T-cell (primary cell): ENCODE measurements at regions of chr16 and their contacts with region 1.

Region 1: GRCh38 chr16:81668243-81669097 is 110.6 kb upstream of the PLCG2 start:
- DNase-seq: peak in 1 of 35 experiments; percentile 2
- ATAC-seq: no peak
- H3K4me3 ChIP-seq: no peak overlapping the region
- H3K4me3 Mint-ChIP-seq: no peak overlapping the region
- H3K27ac ChIP-seq: peak overlapping the region; percentile 29
- H3K27ac Mint-ChIP-seq: peak overlapping the region; percentile 36 to 40
- H3K4me1 ChIP-seq: peaks cover 0 to 2% of the 10 kb centered on the region in 2 experiments
- H3K4me1 Mint-ChIP-seq: no peaks in the 10 kb centered on the region
- H3K27me3 ChIP-seq: no peaks in the 10 kb centered on the region
- H3K27me3 Mint-ChIP-seq: no peaks in the 10 kb centered on the region

Region 2: DNA sequence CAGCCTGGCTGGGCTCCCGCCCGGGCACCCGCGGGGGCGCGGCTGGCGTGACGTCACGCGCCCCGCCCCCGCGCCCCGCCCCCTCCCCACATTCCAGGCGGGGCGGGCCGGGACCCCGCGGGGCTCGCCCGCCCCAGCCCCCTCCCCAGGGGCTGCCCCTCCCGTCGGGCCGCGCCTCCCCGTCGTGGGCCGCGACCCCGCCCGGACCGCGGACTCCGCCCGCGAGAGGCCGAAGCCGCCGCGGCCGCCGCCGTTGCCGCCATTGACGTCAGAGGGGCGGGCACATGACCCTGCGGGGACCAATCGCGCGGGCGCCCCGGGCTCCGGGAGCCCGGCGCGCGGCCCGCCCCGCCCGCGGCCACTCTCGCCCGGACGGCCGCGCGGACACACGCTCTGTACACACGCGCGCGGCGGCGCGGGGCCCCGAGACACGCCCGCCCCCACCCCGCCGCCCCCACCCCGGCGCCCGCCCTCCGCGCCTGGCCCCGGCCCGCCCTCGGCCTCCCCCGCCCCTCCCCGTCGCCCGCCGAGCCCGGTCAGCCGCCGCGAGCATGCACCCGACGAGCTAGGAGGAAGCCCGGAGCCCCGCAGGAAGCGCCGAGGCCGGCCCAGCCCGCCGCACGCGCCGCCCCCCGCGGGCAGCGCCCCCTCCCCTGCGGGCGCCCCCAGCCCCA is 223.9 kb before region 1 on chr16 and contains the start of gene CMIP:
- CTCF ChIA-PET with region 1: interaction called in 1 of 2 experiments, 12 read pairs
- POLR2A ChIA-PET with region 1: no interaction called
- DNase-seq: peak; percentile 50 to 88 (median 71)
- ATAC-seq: peak; percentile 72 to 80 (median 74)
- H3K4me3 ChIP-seq: peak within 1 kb of the TSS; percentile 59 to 95
- H3K4me3 Mint-ChIP-seq: peak within 1 kb of the TSS; percentile 87 to 97 (median 89)
- H3K27ac ChIP-seq: peak within 1 kb of the TSS; percentile 69
- H3K27ac Mint-ChIP-seq: peak within 1 kb of the TSS; percentile 84 to 90
- H3K4me1 ChIP-seq: peaks cover 12 to 53% of the 10 kb centered on the region in 2 experiments
- H3K4me1 Mint-ChIP-seq: peaks cover 38 to 50% (median 47%) of the 10 kb centered on the region in 3 donors
- H3K27me3 ChIP-seq: no peaks in the 10 kb centered on the region
- H3K27me3 Mint-ChIP-seq: no peaks in the 10 kb centered on the region
- total RNA-seq, gene CMIP: 39.8 to 55.9 (median 42.6) TPM

Region 3: GRCh38 chr16:81650982-81651562 is 17.4 kb before region 1 on chr16:
- CTCF ChIA-PET with region 1: interaction called in 1 of 2 experiments, 11 read pairs
- POLR2A ChIA-PET with region 1: no interaction called
- DNase-seq: no peak
- ATAC-seq: no peak
- H3K4me3 ChIP-seq: no peak overlapping the region
- H3K4me3 Mint-ChIP-seq: no peak overlapping the region
- H3K27ac ChIP-seq: no peak overlapping the region
- H3K27ac Mint-ChIP-seq: no peak overlapping the region
- H3K4me1 ChIP-seq: no peaks in the 10 kb centered on the region
- H3K4me1 Mint-ChIP-seq: peaks cover 3 to 13% (median 8%) of the 10 kb centered on the region in 3 donors
- H3K27me3 ChIP-seq: no peaks in the 10 kb centered on the region
- H3K27me3 Mint-ChIP-seq: no peaks in the 10 kb centered on the region